ENCODE measurements at regions of chr5 and their contacts with region 1.

Region 1: DNA sequence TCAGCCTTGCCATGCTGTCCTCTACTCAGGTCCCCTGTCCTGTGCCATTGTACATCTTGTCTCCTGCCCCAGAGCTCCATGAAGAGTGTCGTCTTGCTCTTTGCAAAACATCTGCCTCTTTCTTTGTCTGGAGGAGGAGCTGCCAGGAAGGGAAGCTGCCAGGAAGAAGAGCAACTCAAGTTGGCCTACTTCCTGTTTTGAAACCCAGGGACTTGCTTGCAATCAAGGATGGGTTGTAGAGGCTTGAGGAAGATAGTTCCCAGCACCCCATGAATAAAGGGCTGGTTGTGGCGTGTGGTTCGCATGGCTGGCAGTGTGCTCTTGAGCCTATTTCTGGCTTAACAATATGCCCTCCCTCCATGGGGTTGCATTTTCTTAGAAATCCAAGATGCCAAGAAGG is 53.0 kb upstream of the CPEB4 start:
- DNase-seq: no peak
- ATAC-seq: no peak
- H3K4me3 ChIP-seq: no peak overlapping the region
- H3K27ac ChIP-seq: no peak overlapping the region
- H3K4me1 ChIP-seq: peaks cover 20 to 65% of the 10 kb centered on the region in 2 experiments
- H3K27me3 ChIP-seq: no peaks in the 10 kb centered on the region
- CTCF ChIP-seq: no peak
- EP300 ChIP-seq: no peak
- POLR2A ChIP-seq: no peak
- RAD21 ChIP-seq: no peak

Region 2: GRCh38 chr5:173625696-173626504 is 209.2 kb before region 1 on chr5:
- CTCF ChIA-PET with region 1: no interaction called
- POLR2A ChIA-PET with region 1: interaction called, 3 read pairs
- in situ Hi-C with region 1: no loop called
- intact Hi-C with region 1: loop called (anchors 5 kb)
- DNase-seq: peak in 2 of 4 experiments; percentile 24 to 44
- ATAC-seq: peak; percentile 82
- H3K4me3 ChIP-seq: no peak overlapping the region
- H3K27ac ChIP-seq: no peak overlapping the region
- H3K4me1 ChIP-seq: peaks cover 0 to 19% of the 10 kb centered on the region in 2 experiments; a peak in 4 of 5 replicates
- H3K27me3 ChIP-seq: no peaks in the 10 kb centered on the region
- CTCF ChIP-seq: peak; percentile 38 to 62 (median 53)
- EP300 ChIP-seq: no peak
- POLR2A ChIP-seq: no peak
- RAD21 ChIP-seq: peak; percentile 77 to 83

Region 3: GRCh38 chr5:173781814-173782670 is 53.1 kb before region 1 on chr5:
- CTCF ChIA-PET with region 1: no interaction called
- POLR2A ChIA-PET with region 1: interaction called, 7 read pairs
- in situ Hi-C with region 1: no loop called
- intact Hi-C with region 1: loop called (anchors 1 kb)
- DNase-seq: peak; percentile 72 to 86 (median 76)
- ATAC-seq: peak; percentile 52
- H3K4me3 ChIP-seq: no peak overlapping the region
- H3K27ac ChIP-seq: peak overlapping the region; percentile 92
- H3K4me1 ChIP-seq: peaks cover 25 to 61% of the 10 kb centered on the region in 2 experiments
- H3K27me3 ChIP-seq: no peaks in the 10 kb centered on the region
- CTCF ChIP-seq: no peak
- EP300 ChIP-seq: peak; percentile 69; the same call in 1 of the 2 replicates
- POLR2A ChIP-seq: no peak
- RAD21 ChIP-seq: no peak

Region 4: GRCh38 chr5:173823711-173824528 is 11.2 kb before region 1 on chr5:
- CTCF ChIA-PET with region 1: no interaction called
- POLR2A ChIA-PET with region 1: interaction called, 14 read pairs
- in situ Hi-C with region 1: no loop called
- intact Hi-C with region 1: no loop called
- DNase-seq: no peak
- ATAC-seq: no peak
- H3K4me3 ChIP-seq: no peak overlapping the region
- H3K27ac ChIP-seq: no peak overlapping the region
- H3K4me1 ChIP-seq: peaks cover 13 to 40% of the 10 kb centered on the region in 2 experiments
- H3K27me3 ChIP-seq: no peaks in the 10 kb centered on the region
- CTCF ChIP-seq: no peak
- EP300 ChIP-seq: no peak
- POLR2A ChIP-seq: no peak
- RAD21 ChIP-seq: no peak

Region 5: DNA sequence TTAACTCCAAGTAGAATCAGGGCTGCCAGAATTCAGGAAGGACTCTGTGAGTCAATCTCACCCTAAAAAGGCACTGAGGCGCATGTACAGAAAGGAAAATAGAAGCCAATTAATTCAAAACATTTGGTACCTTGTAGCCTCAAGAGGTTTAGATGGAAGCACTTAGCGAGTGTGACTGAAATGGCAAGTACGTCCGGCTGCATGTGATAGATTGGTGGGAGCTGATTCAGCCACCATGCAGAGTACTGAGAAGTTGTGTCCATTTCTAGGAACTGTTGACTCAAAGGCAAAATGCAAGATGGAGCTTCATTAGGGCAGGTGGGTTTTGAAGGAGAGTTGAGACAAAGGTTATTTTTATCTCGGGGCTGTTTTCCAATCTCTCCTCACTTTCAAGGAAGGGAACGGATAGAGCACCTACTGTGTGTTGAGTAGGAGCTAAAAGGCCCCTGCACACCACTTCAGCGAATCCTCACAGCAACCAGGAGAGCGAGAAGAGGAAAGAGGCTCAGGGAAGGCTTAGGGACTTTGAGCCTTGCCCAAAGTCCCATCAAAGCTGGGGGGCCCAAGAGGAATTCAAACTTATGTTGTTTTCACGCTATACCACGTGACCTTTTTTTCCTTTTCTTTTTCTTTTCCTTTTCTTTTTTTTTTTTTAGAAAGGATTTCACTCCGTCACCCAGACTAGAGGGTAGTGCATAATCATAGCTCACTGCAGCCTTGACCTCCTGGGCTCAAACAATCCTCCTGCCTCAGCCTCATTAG is 18.4 kb after region 1 on chr5:
- CTCF ChIA-PET with region 1: no interaction called
- POLR2A ChIA-PET with region 1: interaction called, 20 read pairs
- in situ Hi-C with region 1: no loop called
- intact Hi-C with region 1: loop called (anchors 1 kb)
- DNase-seq: peak; percentile 53 to 97 (median 68)
- ATAC-seq: peak; percentile 68
- H3K4me3 ChIP-seq: no peak overlapping the region
- H3K27ac ChIP-seq: peak overlapping the region; percentile 91
- H3K4me1 ChIP-seq: peaks cover 62 to 86% of the 10 kb centered on the region in 2 experiments
- H3K27me3 ChIP-seq: no peaks in the 10 kb centered on the region; a peak in 1 of 5 replicates
- CTCF ChIP-seq: 0 out of 6 replicates have a peak, but pooled peaks of 1 of the 3 experiments have one; percentile 1
- EP300 ChIP-seq: peak; percentile 98
- POLR2A ChIP-seq: peak; percentile 48; the same call in 1 of the 2 replicates
- RAD21 ChIP-seq: peak in 1 of 2 experiments; percentile 30; a peak in 2 of 4 replicates

Region 6: DNA sequence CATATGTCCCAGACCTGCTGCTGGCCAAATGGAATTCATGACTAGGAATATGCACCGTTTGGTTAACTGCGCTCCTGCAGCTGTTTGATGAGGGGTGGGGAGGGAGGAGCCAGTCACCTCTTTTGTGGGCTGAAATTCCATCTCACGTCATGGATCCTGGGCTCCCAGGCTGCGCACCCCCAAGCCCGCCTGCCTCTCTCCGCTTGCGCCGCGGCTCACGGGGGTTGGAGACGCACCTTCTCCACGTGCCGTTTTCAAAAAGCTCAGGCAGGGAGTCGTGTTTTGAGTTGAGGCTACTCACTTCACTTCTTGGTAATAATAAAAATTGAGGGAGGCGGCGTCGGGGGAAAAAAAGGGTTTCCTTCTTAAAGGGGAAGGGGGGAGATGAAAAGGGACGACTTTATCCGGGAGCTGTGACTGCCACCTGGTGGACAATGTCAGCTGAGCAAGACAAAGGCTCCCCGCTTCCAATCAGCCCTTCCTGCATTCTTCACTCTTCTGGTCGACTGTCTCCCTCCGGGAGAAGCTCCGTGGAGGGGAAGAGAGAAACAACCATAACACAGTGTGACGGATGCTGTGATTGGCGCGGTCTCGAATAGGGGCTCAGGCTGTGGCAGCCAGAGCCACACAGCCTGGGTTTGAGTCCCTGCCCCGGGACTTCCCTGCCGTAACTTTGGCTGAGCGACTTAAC is 137.9 kb after region 1 on chr5:
- CTCF ChIA-PET with region 1: no interaction called
- POLR2A ChIA-PET with region 1: no interaction called
- in situ Hi-C with region 1: no loop called
- intact Hi-C with region 1: loop called (anchors 5 kb)
- DNase-seq: peak; percentile 81 to 89 (median 82)
- ATAC-seq: peak; percentile 82
- H3K4me3 ChIP-seq: peak overlapping the region; percentile 36
- H3K27ac ChIP-seq: no peak overlapping the region; the same call in 1 of the 3 replicates
- H3K4me1 ChIP-seq: peaks cover 28 to 39% of the 10 kb centered on the region in 2 experiments
- H3K27me3 ChIP-seq: peaks cover 0 to under 1% of the 10 kb centered on the region in 2 experiments; a peak in 1 of 5 replicates
- CTCF ChIP-seq: peak; percentile 81 to 91 (median 88)
- EP300 ChIP-seq: no peak
- POLR2A ChIP-seq: no peak
- RAD21 ChIP-seq: peak; percentile 79 to 93